Posterior cingulate gyrus (tissue), 11 donors: ENCODE measurements at regions of chr17 and their contacts with region 1.

Region 1: GRCh38 chr17:46193626-46194392 is 580 bp upstream of the KANSL1 start:
- DNase-seq: peak; percentile 92 to 99 (median 98)

Region 2: DNA sequence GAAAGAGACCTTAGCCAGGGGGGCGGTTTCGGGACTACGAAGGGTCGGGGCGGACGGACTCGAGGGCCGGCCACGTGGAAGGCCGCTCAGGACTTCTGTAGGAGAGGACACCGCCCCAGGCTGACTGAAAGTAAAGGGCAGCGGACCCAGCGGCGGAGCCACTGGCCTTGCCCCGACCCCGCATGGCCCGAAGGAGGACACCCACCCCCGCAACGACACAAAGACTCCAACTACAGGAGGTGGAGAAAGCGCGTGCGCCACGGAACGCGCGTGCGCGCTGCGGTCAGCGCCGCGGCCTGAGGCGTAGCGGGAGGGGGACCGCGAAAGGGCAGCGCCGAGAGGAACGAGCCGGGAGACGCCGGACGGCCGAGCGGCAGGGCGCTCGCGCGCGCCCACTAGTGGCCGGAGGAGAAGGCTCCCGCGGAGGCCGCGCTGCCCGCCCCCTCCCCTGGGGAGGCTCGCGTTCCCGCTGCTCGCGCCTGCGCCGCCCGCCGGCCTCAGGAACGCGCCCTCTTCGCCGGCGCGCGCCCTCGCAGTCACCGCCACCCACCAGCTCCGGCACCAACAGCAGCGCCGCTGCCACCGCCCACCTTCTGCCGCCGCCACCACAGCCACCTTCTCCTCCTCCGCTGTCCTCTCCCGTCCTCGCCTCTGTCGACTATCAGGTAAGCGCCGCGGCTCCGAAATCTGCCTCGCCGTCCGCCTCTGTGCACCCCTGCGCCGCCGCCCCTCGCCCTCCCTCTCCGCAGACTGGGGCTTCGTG is 299.6 kb before region 1 on chr17 and contains the start of gene MAPT:
- intact Hi-C with region 1: loop called (anchors 10 kb)
- DNase-seq: peak; percentile 89 to 99 (median 94)

Region 3: DNA sequence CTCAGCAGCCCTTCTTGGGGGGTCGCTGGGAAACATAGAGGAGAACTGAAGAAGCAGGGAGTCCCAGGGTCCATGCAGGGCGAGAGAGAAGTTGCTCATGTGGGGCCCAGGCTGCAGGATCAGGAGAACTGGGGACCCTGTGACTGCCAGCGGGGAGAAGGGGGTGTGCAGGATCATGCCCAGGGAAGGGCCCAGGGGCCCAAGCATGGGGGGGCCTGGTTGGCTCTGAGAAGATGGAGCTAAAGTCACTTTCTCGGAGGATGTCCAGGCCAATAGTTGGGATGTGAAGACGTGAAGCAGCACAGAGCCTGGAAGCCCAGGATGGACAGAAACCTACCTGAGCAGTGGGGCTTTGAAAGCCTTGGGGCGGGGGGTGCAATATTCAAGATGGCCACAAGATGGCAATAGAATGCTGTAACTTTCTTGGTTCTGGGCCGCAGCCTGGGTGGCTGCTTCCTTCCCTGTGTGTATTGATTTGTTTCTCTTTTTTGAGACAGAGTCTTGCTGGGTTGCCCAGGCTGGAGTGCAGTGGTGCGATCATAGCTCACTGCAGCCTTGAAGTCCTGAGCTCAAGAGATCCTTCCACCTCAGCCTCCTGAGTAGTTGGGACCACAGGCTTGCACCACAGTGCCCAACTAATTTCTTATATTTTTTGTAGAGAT is 191.4 kb before region 1 on chr17:
- intact Hi-C with region 1: loop called (anchors 2 kb)
- DNase-seq: peak in 8 of 10 donors; percentile 51 to 93 (median 74)

Region 4: GRCh38 chr17:46044286-46044928 is 149.4 kb before region 1 on chr17:
- intact Hi-C with region 1: loop called (anchors 1 kb)
- DNase-seq: peak in 6 of 10 donors; percentile 47 to 83 (median 60)

Region 5: DNA sequence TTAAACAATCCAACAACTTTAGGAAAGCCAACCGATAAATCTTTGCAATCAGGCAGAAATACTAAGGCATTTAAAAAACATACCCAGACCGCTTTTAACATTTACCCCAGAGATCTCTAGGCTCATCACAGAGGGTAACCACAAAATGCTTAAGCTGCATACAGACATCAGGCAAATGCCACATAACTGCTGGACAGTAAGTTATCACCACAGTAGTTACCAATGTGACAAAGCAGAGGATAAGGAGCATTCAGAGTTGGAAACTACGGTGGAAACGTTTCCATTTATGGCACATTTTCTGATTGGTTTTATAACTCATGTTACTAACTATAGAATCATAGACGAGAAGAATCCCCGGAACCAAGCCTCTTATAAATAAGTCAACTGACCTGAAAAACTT is 78.1 kb before region 1 on chr17:
- intact Hi-C with region 1: loop called (anchors 5 kb)
- DNase-seq: no peak

Region 6: DNA sequence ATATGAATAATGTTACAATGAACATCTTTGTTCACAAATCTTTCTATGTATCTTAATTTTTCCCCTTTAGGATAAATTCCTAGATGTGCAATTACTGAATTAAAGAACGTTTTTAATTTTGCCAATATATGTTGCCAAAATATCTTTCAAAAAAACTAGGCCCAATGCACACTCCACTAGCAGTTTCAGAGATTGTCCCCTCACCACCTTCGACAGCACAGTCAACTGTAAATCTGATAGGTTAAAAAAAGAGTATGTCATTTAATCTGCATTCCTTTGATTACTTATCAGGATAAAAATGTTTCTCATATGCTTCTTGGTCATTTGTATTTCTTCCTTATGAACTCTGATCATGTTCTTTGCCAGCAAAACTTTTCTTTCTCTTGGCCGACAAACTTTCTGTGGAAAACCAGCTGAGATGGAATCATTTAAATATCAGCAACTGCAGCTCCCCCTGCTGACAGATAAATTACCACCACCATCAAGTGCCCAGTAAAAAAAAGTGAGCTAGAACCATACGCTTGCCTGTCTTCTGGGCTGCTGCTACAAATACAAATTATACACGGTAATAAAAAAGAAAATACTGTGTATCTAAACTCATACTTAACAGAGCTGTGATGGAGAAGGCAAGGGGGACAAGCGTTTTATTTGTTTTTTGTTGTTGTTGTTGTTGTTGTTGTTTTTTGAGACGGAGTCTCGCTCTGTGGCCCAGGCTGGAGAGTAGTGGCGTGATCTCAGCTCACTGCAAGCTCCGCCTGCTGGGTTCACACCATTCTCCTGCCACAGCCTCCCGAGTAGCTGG is 19.0 kb after region 1 on chr17:
- intact Hi-C with region 1: loop called (anchors 2 kb)
- DNase-seq: peak in 5 of 10 donors; percentile 27 to 63 (median 42)

Region 7: GRCh38 chr17:46266656-46267544 is 73.1 kb after region 1 on chr17:
- intact Hi-C with region 1: loop called (anchors 5 kb)
- DNase-seq: peak; percentile 56 to 98 (median 82)